Psoas muscle (tissue), 8 donors: ENCODE measurements at regions of chr1 and their contacts with region 1.

Region 1: GRCh38 chr1:223142795-223143536 is at the start of gene TLR5:
- DNase-seq: peak; percentile 87 to 90
- ATAC-seq: peak; percentile 88 to 96 (median 91)
- H3K4me3 ChIP-seq: peak within 1 kb of the TSS; percentile 75
- H3K27ac ChIP-seq: peak within 1 kb of the TSS; percentile 73
- H3K4me1 ChIP-seq: peaks cover 20% of the 10 kb centered on the region
- H3K27me3 ChIP-seq: no peaks in the 10 kb centered on the region
- CTCF ChIP-seq: peak; percentile 59
- total RNA-seq, gene TLR5: 0.80 to 3.1 (median 1.9) TPM

Region 2: DNA sequence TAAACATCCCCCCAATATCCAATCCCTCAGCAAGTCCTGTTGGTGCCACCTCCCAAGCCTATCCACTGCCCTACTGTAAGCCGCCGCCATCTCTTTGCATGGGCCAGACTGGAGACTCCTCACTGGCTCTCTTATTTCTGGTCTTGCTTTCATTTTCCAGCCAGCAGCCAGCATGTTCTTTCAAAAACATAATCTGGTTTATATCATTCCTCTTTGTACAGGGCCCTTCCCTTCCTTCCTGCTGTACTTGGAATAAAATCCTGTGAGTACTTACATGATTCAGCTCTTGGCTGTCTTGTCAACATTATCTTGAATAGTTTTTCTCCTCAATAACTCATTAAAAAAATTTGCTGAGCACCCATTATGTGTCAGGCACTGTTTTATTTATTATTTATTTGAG is 28.1 kb before region 1 on chr1:
- intact Hi-C with region 1: no loop called
- DNase-seq: no peak
- ATAC-seq: no peak
- H3K4me3 ChIP-seq: no peak overlapping the region
- H3K27ac ChIP-seq: peak overlapping the region; percentile 16
- H3K4me1 ChIP-seq: no peaks in the 10 kb centered on the region
- H3K27me3 ChIP-seq: no peaks in the 10 kb centered on the region
- CTCF ChIP-seq: no peak

Region 3: DNA sequence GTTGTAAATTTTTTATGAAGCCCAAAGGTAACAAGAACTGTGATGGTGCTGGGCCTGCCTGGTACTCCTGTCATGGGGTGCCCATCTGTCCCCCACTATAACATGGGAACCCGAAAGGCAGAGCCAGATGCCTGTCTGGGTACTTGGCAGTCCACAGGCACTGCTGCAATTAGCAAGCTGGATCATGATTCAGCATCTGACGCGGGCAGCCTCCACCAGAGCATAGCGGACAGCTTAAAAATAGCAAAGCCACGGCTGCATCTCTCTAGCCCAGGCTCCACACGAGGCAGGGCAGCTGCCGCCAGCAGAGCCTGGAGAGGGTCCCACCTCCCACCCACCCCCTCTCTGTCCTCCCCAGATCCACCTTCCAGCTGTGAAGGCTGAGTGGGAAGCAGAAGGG is 198.2 kb after region 1 on chr1:
- intact Hi-C with region 1: loop called in 1 of 2 experiments (anchors 10 kb)
- DNase-seq: peak; percentile 38 to 77
- ATAC-seq: peak; percentile 95 to 99 (median 96)
- H3K4me3 ChIP-seq: no peak overlapping the region
- H3K27ac ChIP-seq: peak overlapping the region; percentile 43
- H3K4me1 ChIP-seq: peaks cover 13% of the 10 kb centered on the region
- H3K27me3 ChIP-seq: peaks cover 0 to 1% (median 0%) of the 10 kb centered on the region in 3 donors
- CTCF ChIP-seq: no peak

Region 4: GRCh38 chr1:223363856-223364684 is 221.1 kb after region 1 on chr1 and contains the start of gene SUSD4:
- intact Hi-C with region 1: loop called in 1 of 2 experiments (anchors 10 kb)
- DNase-seq: peak; percentile 33 to 59
- ATAC-seq: peak; percentile 70 to 90 (median 84)
- H3K4me3 ChIP-seq: peak within 1 kb of the TSS; percentile 68
- H3K27ac ChIP-seq: no peak within 1 kb of the TSS
- H3K4me1 ChIP-seq: peaks cover 7% of the 10 kb centered on the region
- H3K27me3 ChIP-seq: peaks cover 0 to 31% (median 0%) of the 10 kb centered on the region in 3 donors
- CTCF ChIP-seq: no peak
- total RNA-seq, gene SUSD4: 0.15 to 3.9 (median 1.4) TPM